Caco-2 (cell line): ENCODE measurements at regions of chr16 and their contacts with region 1.

Region 1: DNA sequence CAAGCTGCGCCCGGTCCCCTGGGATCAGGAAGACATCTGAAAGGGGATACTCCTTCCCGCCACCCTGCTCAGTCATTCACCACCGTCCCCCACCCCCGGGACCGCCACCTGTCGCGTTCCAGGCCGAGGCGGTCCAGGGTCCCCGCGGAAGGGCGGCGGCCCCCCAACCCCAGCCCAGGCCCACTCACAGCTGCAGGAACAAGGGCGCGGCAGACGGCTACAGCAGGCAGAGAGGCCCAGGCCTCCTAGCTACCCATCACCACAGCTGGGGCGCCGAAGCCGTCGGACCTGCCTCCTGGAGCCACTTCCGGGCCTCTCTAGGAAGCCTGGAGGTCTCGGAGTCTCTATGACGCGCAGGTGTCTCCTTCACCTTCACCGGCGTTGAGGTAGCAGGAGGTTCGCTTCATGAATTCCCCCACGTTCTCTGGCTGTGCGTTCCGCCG is at the start of gene SDR42E1:
- DNase-seq: peak; percentile 74 to 79
- H3K4me3 ChIP-seq: peak within 1 kb of the TSS; percentile 41
- H3K4me3 Mint-ChIP-seq: peak within 1 kb of the TSS; percentile 76
- H3K27ac Mint-ChIP-seq: peak within 1 kb of the TSS; percentile 63
- H3K4me1 ChIP-seq: no peaks in the 10 kb centered on the region
- H3K4me1 Mint-ChIP-seq: no peaks in the 10 kb centered on the region
- H3K27me3 ChIP-seq: no peaks in the 10 kb centered on the region
- H3K27me3 Mint-ChIP-seq: peaks cover 4% of the 10 kb centered on the region
- CTCF ChIP-seq: no peak
- total RNA-seq, gene SDR42E1: 5.3 and 7.5 TPM in 2 replicates

Region 2: GRCh38 chr16:81967358-81967757 is 43.9 kb before region 1 on chr16:
- CTCF ChIA-PET with region 1: no interaction called
- POLR2A ChIA-PET with region 1: no interaction called
- intact Hi-C with region 1: no loop called
- DNase-seq: no peak
- H3K4me3 ChIP-seq: no peak overlapping the region
- H3K4me3 Mint-ChIP-seq: no peak overlapping the region
- H3K27ac Mint-ChIP-seq: no peak overlapping the region
- H3K4me1 ChIP-seq: no peaks in the 10 kb centered on the region
- H3K4me1 Mint-ChIP-seq: no peaks in the 10 kb centered on the region
- H3K27me3 ChIP-seq: no peaks in the 10 kb centered on the region
- H3K27me3 Mint-ChIP-seq: peaks cover 25% of the 10 kb centered on the region
- CTCF ChIP-seq: no peak

Region 3: DNA sequence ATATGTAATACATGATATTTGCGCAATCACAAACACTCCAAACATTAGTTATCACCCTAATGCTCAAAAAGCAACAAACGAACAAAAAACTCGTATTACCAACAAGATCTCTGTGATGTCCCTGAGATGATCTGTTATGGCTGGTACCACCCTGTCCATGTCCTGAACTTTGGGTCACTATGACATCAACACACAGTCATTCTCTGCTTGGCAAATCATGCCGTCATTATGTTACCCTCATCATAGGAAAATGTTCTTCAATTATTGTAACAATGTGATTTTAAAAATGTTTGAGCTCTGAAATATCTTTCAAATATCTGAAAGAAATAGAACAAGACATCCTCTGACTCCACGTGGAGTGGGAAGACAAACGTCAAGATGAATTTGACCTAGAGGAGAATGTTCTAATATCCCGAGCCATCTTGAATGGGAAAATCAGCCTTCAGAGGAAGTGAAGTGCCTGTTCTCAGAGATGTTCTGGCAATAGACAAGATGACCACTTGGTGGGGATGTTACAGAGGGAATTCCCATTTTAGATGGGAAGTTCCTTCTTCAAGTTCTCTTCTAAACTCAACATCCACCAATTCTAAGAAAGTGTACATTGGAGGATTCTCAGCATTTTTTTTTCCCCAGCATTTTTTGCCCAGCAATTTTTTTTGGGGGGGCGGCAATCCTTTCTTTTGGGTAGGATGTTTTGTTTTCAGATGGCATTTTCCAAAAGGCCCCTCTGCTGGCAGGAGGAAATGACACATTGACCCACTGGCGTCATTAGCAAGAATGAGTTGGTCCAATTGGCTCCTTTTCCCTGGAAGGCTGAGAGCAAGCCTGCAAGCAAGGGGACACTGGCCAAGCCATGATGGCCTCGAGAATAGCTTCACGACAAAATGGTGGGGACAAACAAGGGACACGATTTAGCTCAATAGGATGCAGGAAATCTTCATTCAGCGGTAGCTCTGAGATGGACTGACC is 20.2 kb after region 1 on chr16:
- CTCF ChIA-PET with region 1: no interaction called
- POLR2A ChIA-PET with region 1: no interaction called
- intact Hi-C with region 1: no loop called
- DNase-seq: peak in 1 of 2 experiments; percentile 70
- H3K4me3 ChIP-seq: no peak overlapping the region
- H3K4me3 Mint-ChIP-seq: no peak overlapping the region
- H3K27ac Mint-ChIP-seq: no peak overlapping the region
- H3K4me1 ChIP-seq: peaks cover 24% of the 10 kb centered on the region
- H3K4me1 Mint-ChIP-seq: peaks cover 32% of the 10 kb centered on the region
- H3K27me3 ChIP-seq: no peaks in the 10 kb centered on the region
- H3K27me3 Mint-ChIP-seq: no peaks in the 10 kb centered on the region
- CTCF ChIP-seq: peak; percentile 80 to 87

Region 4: GRCh38 chr16:82295290-82296201 is 284.3 kb after region 1 on chr16:
- CTCF ChIA-PET with region 1: no interaction called
- POLR2A ChIA-PET with region 1: interaction called, 19 read pairs
- intact Hi-C with region 1: no loop called
- DNase-seq: no peak
- H3K4me3 ChIP-seq: no peak overlapping the region
- H3K4me3 Mint-ChIP-seq: no peak overlapping the region
- H3K27ac Mint-ChIP-seq: no peak overlapping the region
- H3K4me1 ChIP-seq: no peaks in the 10 kb centered on the region
- H3K4me1 Mint-ChIP-seq: no peaks in the 10 kb centered on the region
- H3K27me3 ChIP-seq: no peaks in the 10 kb centered on the region
- H3K27me3 Mint-ChIP-seq: peaks cover 21% of the 10 kb centered on the region
- CTCF ChIP-seq: no peak